Common myeloid progenitor, CD34-positive (primary cell): ENCODE measurements at regions of chr3 and their contacts with region 1.

Region 1: DNA sequence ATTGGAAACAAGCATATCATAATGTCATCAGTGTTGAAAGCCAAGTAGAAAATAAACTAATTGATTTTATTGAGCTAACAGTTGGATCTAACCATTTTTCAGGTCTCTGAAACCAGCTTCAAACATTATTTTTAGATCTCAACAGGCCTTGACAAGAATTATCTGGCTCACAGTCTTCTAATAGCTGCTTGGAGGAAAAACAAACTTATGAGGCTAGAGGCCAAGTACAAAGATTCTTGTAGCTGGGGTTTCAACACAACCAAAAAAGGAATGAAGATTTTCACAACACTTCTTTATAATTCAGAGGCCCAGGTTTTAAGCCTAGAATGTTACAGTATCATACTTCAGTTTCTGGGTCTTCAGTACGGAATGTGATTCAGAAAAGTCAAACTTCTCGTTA is 3.7 kb downstream of the SETMAR start:
- DNase-seq: no peak
- H3K4me3 ChIP-seq: no peak overlapping the region
- H3K27ac ChIP-seq: no peak overlapping the region
- H3K4me1 ChIP-seq: peaks cover 0 to 40% (median 20%) of the 10 kb centered on the region in 4 experiments
- H3K27me3 ChIP-seq: no peaks in the 10 kb centered on the region

Region 2: GRCh38 chr3:4290272-4290893 is 16.5 kb before region 1 on chr3:
- CTCF ChIA-PET with region 1: interaction called, 10 read pairs
- POLR2A ChIA-PET with region 1: no interaction called
- DNase-seq: peak; percentile 54 to 75 (median 70)
- H3K4me3 ChIP-seq: no peak overlapping the region
- H3K27ac ChIP-seq: no peak overlapping the region
- H3K4me1 ChIP-seq: peaks cover 8 to 16% (median 12%) of the 10 kb centered on the region in 4 experiments
- H3K27me3 ChIP-seq: no peaks in the 10 kb centered on the region

Region 3: DNA sequence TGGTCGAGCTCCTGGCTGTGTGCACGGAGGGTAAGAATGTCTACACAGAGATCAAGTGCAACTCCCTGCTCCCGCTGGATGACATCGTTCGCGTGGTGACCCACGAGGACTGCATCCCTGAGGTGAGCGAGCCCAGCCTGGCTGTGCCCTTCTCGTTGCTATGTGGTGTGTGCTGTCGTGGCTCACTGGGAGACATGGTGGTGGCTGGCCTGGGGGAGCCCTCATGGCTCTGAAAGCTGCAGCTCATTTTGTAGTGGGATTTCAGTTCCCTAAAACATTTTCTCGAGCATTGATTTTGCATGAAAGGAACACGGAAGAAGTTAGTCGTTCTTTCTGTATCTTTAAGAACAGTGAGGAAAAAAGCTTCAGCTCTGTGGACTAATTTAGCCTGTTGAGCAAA is 386.8 kb after region 1 on chr3:
- CTCF ChIA-PET with region 1: no interaction called
- POLR2A ChIA-PET with region 1: no interaction called
- DNase-seq: no peak
- H3K4me3 ChIP-seq: no peak overlapping the region
- H3K27ac ChIP-seq: no peak overlapping the region
- H3K4me1 ChIP-seq: peaks cover 0 to 8% (median 2%) of the 10 kb centered on the region in 4 experiments
- H3K27me3 ChIP-seq: no peaks in the 10 kb centered on the region